Activated T-helper 2 cell treated with anti-CD3 and anti-CD28 coated beads, Interferon-gamma antibody, Interleukin-2, Interleukin-4, amounts not matched to agents 10 μg/mL and 5 μg/mL and 100 μg/mL, durations not matched to agents 14 hours and 24 hours and 36 hours (primary cell): ENCODE measurements at regions of chr13 and their contacts with region 1.

Region 1: GRCh38 chr13:23375001-23375971 is 58.2 kb downstream of the SACS start:
- DNase-seq: peak; percentile 90
- H3K4me3 Mint-ChIP-seq: peak overlapping the region; percentile 72
- H3K27ac Mint-ChIP-seq: no peak overlapping the region
- H3K4me1 Mint-ChIP-seq: peaks cover 65% of the 10 kb centered on the region
- H3K27me3 Mint-ChIP-seq: peaks cover 2% of the 10 kb centered on the region

Region 2: GRCh38 chr13:23321535-23322241 is 53.6 kb before region 1 on chr13:
- intact Hi-C with region 1: loop called (anchors 5 kb)
- DNase-seq: no peak
- H3K4me3 Mint-ChIP-seq: peak overlapping the region; percentile 37
- H3K27ac Mint-ChIP-seq: peak overlapping the region; percentile 34
- H3K4me1 Mint-ChIP-seq: peaks cover 48% of the 10 kb centered on the region
- H3K27me3 Mint-ChIP-seq: peaks cover 5% of the 10 kb centered on the region

Region 3: DNA sequence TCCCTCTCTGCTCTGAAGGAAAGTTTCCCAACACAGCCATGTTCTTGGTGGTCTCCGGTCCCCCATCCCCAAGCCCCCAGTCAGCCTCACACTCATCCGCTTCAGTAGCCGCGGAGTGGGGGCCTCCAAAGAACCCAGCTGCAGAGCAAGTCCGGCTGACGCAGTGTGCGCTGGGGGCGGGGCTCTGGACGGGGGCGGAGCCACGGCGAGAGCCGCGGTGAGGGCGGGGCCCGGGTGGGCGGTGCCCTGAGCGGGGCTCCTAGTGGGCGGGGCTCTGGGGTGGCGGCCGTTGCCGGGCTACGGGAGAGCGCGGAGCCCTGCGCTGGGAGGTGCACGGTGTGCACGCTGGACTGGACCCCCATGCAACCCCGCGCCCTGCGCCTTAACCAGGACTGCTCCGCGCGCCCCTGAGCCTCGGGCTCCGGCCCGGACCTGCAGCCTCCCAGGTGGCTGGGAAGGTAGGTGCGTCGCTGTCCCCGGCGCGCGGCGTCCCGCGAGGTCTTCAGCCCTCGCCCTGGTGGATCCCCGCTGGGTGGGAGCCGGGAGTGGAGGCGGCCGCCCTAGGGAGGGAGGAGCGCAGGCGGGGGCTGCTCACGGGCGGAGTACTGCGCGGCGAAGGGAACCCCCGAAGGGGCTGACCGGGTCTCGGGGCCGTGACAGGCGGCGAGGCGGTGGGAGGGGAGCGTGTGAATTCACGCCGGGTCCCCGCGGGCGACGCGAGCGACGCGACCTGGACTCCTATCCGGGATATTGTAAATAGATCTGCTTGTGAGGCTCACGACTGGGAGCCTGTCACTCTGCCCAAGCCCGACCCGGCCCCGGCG is 204.0 kb after region 1 on chr13:
- intact Hi-C with region 1: loop called (anchors 1 kb)
- DNase-seq: peak; percentile 88
- H3K4me3 Mint-ChIP-seq: peak overlapping the region; percentile 70
- H3K27ac Mint-ChIP-seq: no peak overlapping the region
- H3K4me1 Mint-ChIP-seq: peaks cover 15% of the 10 kb centered on the region
- H3K27me3 Mint-ChIP-seq: peaks cover 66% of the 10 kb centered on the region

Region 4: GRCh38 chr13:23888658-23889614 is 513.6 kb after region 1 on chr13 and contains the start of gene MIPEP:
- intact Hi-C with region 1: loop called (anchors 1 kb)
- DNase-seq: peak; percentile 85
- H3K4me3 Mint-ChIP-seq: peak within 1 kb of the TSS; percentile 88
- H3K27ac Mint-ChIP-seq: peak within 1 kb of the TSS; percentile 69
- H3K4me1 Mint-ChIP-seq: peaks cover 13% of the 10 kb centered on the region
- H3K27me3 Mint-ChIP-seq: no peaks in the 10 kb centered on the region
- total RNA-seq, gene MIPEP: 9.9 TPM in 2 replicates

Region 5: GRCh38 chr13:24160454-24161009 is 785.2 kb after region 1 on chr13 and contains the start of gene SPATA13:
- intact Hi-C with region 1: loop called (anchors 5 kb)
- DNase-seq: peak; percentile 88
- H3K4me3 Mint-ChIP-seq: peak within 1 kb of the TSS; percentile 90
- H3K27ac Mint-ChIP-seq: peak within 1 kb of the TSS; percentile 50
- H3K4me1 Mint-ChIP-seq: peaks cover 22% of the 10 kb centered on the region
- H3K27me3 Mint-ChIP-seq: peaks cover 17% of the 10 kb centered on the region
- total RNA-seq, gene SPATA13: 41.5 and 44.9 TPM in 2 replicates